ENCODE measurements at regions of chr13 and their contacts with region 1.

Region 1: GRCh38 chr13:24995226-24995804 is 100.6 kb upstream of the PABPC3 start:
- DNase-seq: peak; percentile 66
- H3K4me3 ChIP-seq: no peak overlapping the region
- H3K27ac ChIP-seq: no peak overlapping the region
- H3K27me3 ChIP-seq: peaks cover 2% of the 10 kb centered on the region
- CTCF ChIP-seq: peak; percentile 94

Region 2: GRCh38 chr13:24892829-24893228 is 102.5 kb before region 1 on chr13:
- CTCF ChIA-PET with region 1: interaction called, 11 read pairs
- POLR2A ChIA-PET with region 1: no interaction called
- DNase-seq: no peak
- H3K4me3 ChIP-seq: no peak overlapping the region
- H3K27ac ChIP-seq: no peak overlapping the region
- H3K27me3 ChIP-seq: no peaks in the 10 kb centered on the region
- CTCF ChIP-seq: no peak

Region 3: GRCh38 chr13:24985109-24985508 is 10.2 kb before region 1 on chr13:
- CTCF ChIA-PET with region 1: interaction called, 17 read pairs
- POLR2A ChIA-PET with region 1: no interaction called
- DNase-seq: no peak
- H3K4me3 ChIP-seq: no peak overlapping the region
- H3K27ac ChIP-seq: no peak overlapping the region
- H3K27me3 ChIP-seq: peaks cover 11% of the 10 kb centered on the region
- CTCF ChIP-seq: no peak

Region 4: DNA sequence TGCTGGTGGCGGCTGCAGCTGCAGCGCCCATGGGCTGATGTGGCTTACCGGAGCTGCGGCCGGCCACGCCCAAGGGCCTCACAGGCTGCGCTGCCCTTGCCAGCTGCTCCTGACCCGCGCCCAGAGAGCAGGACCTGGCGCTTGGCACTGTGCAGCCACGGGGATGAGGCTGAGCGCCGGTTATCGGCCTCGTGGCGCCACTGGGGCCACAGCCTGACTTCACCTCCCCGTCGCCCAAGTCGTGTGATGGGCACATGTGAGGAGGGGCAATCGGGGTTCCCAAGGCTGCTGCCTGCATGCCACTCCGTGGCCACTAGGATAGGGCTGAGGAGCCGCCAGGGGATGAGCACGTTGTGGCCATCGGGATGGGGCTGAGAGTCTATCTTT is 23.4 kb after region 1 on chr13:
- CTCF ChIA-PET with region 1: no interaction called
- POLR2A ChIA-PET with region 1: no interaction called
- DNase-seq: no peak
- H3K4me3 ChIP-seq: no peak overlapping the region
- H3K27ac ChIP-seq: no peak overlapping the region
- H3K27me3 ChIP-seq: peaks cover 9% of the 10 kb centered on the region
- CTCF ChIP-seq: no peak

Region 5: DNA sequence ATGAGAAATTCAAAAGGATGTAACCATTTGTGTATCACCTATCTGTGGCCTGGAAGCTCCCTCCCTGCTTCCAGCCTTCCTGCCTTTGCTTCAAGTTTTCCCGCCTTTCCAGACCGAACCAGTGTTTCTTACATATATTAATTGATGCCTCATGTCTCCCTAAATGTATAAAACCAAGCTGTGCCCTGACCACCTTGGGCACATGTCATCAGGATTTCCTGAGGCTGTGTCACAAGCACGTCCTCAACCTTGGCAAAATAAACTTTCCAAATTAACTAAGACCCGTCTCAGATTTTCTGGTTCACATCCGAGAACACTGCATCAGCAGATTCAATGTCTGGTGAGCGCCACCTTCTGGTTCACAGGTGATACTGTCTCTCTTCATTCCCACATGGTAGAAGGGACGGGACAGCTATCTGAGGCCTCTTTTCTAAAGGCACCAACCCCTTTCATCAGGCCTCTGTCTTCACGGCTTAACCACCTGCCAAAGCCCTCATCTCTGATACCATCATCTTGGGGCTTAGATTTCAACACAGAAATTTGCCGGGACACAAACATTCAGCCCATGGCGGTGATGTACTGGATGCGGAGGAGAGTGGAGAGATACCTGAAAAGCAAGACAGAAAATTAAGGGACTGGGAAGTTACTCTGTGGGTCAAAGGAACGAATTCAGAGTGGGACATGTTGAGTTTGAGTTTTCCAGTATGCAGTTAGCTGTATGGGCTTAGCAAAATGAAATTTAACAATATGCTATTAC is 41.9 kb after region 1 on chr13:
- CTCF ChIA-PET with region 1: interaction called, 13 read pairs
- POLR2A ChIA-PET with region 1: no interaction called
- DNase-seq: peak; percentile 23
- H3K4me3 ChIP-seq: no peak overlapping the region
- H3K27ac ChIP-seq: no peak overlapping the region
- H3K27me3 ChIP-seq: no peaks in the 10 kb centered on the region
- CTCF ChIP-seq: peak; percentile 79

Region 6: DNA sequence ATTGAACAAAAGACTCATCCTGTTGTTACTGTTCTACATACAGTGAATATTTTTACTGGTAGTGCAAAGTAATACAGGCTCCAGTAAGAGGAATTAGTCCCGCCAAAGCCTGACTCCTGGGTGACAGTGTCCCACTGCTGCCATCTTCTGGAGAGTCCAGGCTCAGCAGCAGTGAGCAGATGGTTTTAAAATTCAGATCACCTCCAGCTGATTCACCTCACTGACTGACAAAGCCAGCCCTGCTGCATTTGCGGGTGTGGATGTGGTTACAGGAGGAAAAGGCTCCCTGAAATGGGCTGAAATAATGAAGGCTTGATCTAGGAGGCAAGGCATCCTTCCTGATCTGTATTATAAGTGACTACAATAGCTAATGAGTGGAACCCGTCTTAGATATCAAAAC is 118.9 kb after region 1 on chr13:
- CTCF ChIA-PET with region 1: interaction called, 21 read pairs
- POLR2A ChIA-PET with region 1: no interaction called
- DNase-seq: peak; percentile 50
- H3K4me3 ChIP-seq: no peak overlapping the region
- H3K27ac ChIP-seq: no peak overlapping the region
- H3K27me3 ChIP-seq: peaks cover 4% of the 10 kb centered on the region
- CTCF ChIP-seq: peak; percentile 94